ENCODE measurements at regions of chr14 and their contacts with region 1.

Region 1: DNA sequence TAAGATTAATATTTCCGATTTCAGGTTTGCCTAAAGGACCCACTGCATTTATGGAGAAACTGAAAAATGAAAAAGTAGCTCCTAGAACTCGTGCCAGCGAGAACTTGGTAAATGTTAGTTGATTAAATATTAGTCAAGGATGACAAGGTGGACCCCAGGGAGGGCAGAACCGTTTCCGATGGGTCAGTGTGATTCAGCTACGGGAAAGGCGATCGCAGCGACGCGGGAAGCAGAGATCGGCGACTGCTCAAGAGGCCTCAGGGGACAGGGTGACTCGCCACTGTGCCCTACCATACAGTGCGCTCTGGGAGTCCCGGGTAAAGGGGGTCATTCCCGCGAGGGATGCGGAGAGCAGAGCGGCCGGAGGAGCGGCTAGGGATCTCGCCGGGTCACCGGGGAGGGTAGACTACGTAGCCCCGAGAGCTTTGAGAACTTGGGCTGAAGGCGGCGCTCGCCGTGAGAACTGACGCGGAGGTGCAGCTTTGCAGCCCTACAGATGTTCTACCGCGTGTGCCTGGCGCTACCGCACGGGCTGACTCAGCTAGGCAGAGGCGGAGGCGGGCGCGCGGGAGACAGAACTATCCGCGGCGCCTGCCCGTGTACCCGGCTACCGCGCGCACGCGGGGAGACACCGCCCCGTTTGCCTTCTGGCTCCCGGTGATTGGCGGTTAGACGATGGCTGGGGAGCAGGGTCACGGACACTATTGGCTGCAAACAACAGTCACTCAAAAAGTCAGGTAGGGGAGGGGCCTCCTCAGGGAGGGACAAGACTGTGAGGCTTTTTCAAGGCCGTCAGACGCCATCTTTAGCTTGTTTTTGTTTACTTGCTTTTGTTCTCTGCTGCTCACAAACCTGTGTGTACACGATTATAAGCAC is 3.2 kb downstream of the C14orf93 start:
- DNase-seq: peak; percentile 97 to 99 (median 99)
- ATAC-seq: peak; percentile 94
- H3K4me3 ChIP-seq: peak overlapping the region; percentile 43
- H3K27ac ChIP-seq: peak overlapping the region; percentile 97
- H3K4me1 ChIP-seq: peaks cover 20 to 34% of the 10 kb centered on the region in 2 experiments
- H3K27me3 ChIP-seq: no peaks in the 10 kb centered on the region
- CTCF ChIP-seq: peak; percentile 38 to 49 (median 45); a peak in 5 of 6 replicates
- EP300 ChIP-seq: 0 out of 2 replicates have a peak, but pooled peaks have one; percentile 4
- POLR2A ChIP-seq: peak; percentile 93
- RAD21 ChIP-seq: peak in 1 of 2 experiments; percentile 35; a peak in 2 of 4 replicates

Region 2: GRCh38 chr14:22929104-22929847 is 77.5 kb before region 1 on chr14 and contains the start of gene PRMT5:
- CTCF ChIA-PET with region 1: no interaction called
- POLR2A ChIA-PET with region 1: interaction called, 19 read pairs
- in situ Hi-C with region 1: no loop called
- intact Hi-C with region 1: no loop called
- DNase-seq: peak; percentile 94 to 99 (median 96)
- ATAC-seq: peak; percentile 96
- H3K4me3 ChIP-seq: peak within 1 kb of the TSS; percentile 80
- H3K27ac ChIP-seq: peak within 1 kb of the TSS; percentile 88
- H3K4me1 ChIP-seq: peaks cover 5 to 14% of the 10 kb centered on the region in 2 experiments; a peak in 3 of 5 replicates
- H3K27me3 ChIP-seq: no peaks in the 10 kb centered on the region
- CTCF ChIP-seq: peak in 1 of 3 experiments; percentile 26; a peak in 2 of 6 replicates
- EP300 ChIP-seq: peak; percentile 77
- POLR2A ChIP-seq: peak; percentile 99
- RAD21 ChIP-seq: no peak
- polyA plus RNA-seq, gene PRMT5: 114 to 155 TPM

Region 3: GRCh38 chr14:22994762-22995275 is 12.0 kb before region 1 on chr14:
- CTCF ChIA-PET with region 1: no interaction called
- POLR2A ChIA-PET with region 1: interaction called, 81 read pairs
- in situ Hi-C with region 1: no loop called
- intact Hi-C with region 1: no loop called
- DNase-seq: peak; percentile 32 to 74 (median 54)
- ATAC-seq: peak; percentile 94
- H3K4me3 ChIP-seq: no peak overlapping the region
- H3K27ac ChIP-seq: no peak overlapping the region
- H3K4me1 ChIP-seq: peaks cover 7 to 15% of the 10 kb centered on the region in 2 experiments; a peak in 4 of 5 replicates
- H3K27me3 ChIP-seq: no peaks in the 10 kb centered on the region
- CTCF ChIP-seq: peak; percentile 72 to 87 (median 84)
- EP300 ChIP-seq: no peak
- POLR2A ChIP-seq: no peak
- RAD21 ChIP-seq: peak; percentile 73 to 89

Region 4: GRCh38 chr14:23025151-23025814 is 18.5 kb after region 1 on chr14:
- CTCF ChIA-PET with region 1: no interaction called
- POLR2A ChIA-PET with region 1: interaction called, 65 read pairs
- in situ Hi-C with region 1: no loop called
- intact Hi-C with region 1: no loop called
- DNase-seq: peak in 2 of 4 experiments; percentile 27 to 56
- ATAC-seq: peak; percentile 30
- H3K4me3 ChIP-seq: no peak overlapping the region
- H3K27ac ChIP-seq: no peak overlapping the region; the same call in 2 of the 3 replicates
- H3K4me1 ChIP-seq: peaks cover 15 to 39% of the 10 kb centered on the region in 2 experiments; a peak in 4 of 5 replicates
- H3K27me3 ChIP-seq: no peaks in the 10 kb centered on the region
- CTCF ChIP-seq: no peak
- EP300 ChIP-seq: no peak
- POLR2A ChIP-seq: peak; percentile 68
- RAD21 ChIP-seq: no peak

Region 5: DNA sequence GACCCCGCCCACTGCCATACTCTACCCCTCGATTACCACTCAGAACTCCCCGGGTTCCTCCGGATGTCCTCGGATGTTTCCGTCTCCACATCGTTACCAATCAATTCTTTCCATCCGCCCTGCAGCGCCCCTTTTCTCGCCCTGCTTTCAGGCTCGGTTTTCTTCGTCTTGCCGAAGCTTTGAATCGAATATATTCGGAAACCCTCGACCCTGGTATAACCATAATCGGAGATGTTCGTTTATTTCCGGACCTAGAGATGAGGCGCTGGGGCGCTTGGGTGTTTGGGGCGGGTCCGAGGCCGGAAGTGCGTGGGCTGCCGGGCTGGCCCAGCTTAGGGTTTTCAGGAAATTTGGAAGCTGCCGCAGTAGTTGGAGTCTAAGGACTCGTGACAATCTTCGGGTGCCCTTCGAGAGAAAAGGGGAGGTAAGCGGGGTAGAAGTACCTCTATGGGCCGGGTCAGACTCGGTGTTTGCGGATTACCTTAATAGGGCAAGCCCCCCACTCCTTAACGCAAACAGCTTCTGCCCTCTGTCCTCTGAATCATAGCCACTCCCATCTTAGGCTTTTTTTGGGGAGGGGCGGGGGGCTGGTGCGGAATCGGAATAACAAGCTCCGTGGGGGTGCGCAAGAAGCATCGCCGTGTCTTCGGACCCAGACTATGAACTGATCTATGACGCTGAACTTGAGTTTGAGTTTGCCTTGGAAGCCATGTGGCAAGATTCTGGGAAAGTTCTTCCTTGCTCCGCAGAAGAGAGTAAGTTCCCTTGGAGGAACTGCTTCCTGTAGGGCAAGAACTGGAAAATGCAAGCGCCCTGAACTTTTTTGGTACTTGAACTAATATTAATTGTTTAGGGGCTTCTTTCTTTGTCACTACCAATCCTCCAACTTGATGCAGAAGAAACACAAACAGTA is 88.7 kb after region 1 on chr14 and contains the start of gene C14orf119:
- CTCF ChIA-PET with region 1: no interaction called
- POLR2A ChIA-PET with region 1: interaction called, 11 read pairs
- in situ Hi-C with region 1: no loop called
- intact Hi-C with region 1: no loop called
- DNase-seq: peak; percentile 88 to 99 (median 96)
- ATAC-seq: peak; percentile 91
- H3K4me3 ChIP-seq: peak within 1 kb of the TSS; percentile 83
- H3K27ac ChIP-seq: peak within 1 kb of the TSS; percentile 98
- H3K4me1 ChIP-seq: peaks cover 8 to 29% of the 10 kb centered on the region in 2 experiments; a peak in 4 of 5 replicates
- H3K27me3 ChIP-seq: no peaks in the 10 kb centered on the region
- CTCF ChIP-seq: no peak
- EP300 ChIP-seq: peak; percentile 37; the same call in 1 of the 2 replicates
- POLR2A ChIP-seq: peak; percentile 89
- RAD21 ChIP-seq: no peak
- polyA plus RNA-seq, gene C14orf119: 249 to 251 TPM

Measured in K562 (cell line).